WTC11 (cell line): ENCODE measurements at regions of chr2 and their contacts with region 1.

Region 1: DNA sequence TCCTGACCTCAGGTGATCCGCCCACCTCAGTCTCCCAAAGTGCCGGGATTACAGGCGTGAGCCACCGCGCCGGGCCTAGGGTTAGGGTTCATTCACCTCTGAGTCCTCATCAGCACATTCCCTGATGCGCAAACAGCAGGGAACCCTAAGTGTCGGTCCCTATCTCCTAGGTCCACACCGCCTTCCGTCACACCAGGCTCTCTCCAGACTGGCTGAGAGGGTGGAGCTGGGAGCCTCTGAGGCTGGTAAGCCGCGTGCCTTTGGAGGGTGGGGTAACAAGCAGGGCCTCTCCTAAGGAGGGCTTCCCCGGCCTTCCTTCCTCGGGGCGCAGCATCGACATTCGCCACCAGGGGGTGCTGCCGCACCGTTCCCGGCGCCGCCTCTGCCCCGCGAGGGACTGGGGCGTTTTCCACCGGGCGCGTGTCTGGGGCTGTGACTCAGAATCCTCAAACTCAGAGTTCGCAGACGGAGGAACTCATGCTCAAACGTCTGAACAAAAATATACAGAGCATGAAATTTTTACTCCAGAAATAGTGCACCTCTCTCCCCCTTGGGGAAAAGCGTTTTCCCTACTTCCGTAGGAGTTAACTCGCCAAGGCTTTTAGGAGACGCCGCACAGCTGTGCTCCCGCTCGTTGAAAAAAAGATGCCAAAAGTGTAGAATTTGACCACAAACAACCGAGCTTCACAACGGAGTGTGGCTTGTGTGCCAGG is 63.9 kb upstream of the ASAP2 start:
- DNase-seq: peak; percentile 90
- ATAC-seq: peak; percentile 92
- H3K4me3 Mint-ChIP-seq: peak overlapping the region; percentile 53
- H3K27ac Mint-ChIP-seq: no peak overlapping the region
- H3K4me1 Mint-ChIP-seq: peaks cover 16% of the 10 kb centered on the region
- H3K27me3 Mint-ChIP-seq: peaks cover 64% of the 10 kb centered on the region
- CTCF ChIP-seq: peak; percentile 94

Region 2: DNA sequence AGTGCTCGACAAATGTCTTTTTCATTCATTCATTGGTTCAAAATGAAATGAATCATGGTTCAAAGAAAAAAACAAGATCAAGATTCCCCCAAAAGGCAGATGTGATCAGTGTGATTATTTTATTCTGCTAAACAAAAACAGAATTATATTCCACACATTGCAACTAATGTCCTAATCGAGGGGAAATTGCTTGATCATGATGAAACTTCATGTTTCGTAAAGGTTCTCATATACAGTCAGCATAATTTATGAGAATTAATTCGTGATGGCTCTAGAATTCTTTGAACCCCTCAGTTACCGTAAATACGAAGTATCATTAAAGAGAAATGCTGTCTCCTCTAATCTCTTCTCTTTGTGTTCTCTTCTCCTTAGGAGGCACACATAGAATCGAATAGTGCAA is 97.1 kb before region 1 on chr2:
- CTCF ChIA-PET with region 1: no interaction called
- POLR2A ChIA-PET with region 1: no interaction called
- DNase-seq: no peak
- ATAC-seq: no peak
- H3K4me3 Mint-ChIP-seq: no peak overlapping the region
- H3K27ac Mint-ChIP-seq: no peak overlapping the region
- H3K4me1 Mint-ChIP-seq: no peaks in the 10 kb centered on the region
- H3K27me3 Mint-ChIP-seq: no peaks in the 10 kb centered on the region; the same call in 1 of the 2 replicates
- CTCF ChIP-seq: no peak

Region 3: DNA sequence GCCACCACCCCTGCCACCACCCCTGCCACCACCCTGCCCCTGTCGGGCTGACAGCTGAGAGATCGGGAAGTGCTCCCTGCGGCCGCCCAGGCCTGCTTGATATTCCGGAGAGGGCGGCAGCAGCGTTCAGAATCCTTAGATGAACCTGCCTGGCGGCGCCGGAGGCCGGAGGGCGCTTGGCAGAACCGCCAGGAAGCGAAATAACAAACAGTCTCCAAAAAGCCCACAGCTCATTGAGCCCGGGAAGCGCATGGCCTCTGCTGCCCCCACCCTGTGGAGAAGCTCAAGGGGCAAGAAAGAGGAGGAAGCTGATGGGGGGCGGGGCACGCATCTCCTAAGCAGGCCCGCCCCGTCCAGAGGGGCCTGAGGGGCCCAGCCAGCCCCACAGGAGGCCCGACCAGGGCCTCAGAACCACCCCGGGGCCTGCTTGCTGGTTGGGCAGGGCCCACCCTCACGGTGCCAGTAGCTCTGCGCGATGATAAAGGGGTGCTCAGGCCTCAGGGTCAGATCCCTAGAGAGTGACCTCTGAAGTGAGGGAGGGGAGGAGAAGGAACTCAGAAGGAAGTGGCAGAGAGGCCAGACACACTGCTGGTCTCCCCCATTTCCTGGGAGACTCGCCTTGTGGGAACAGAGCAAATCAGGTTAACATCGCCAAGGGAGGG is 46.9 kb before region 1 on chr2:
- CTCF ChIA-PET with region 1: interaction called, 16 read pairs
- POLR2A ChIA-PET with region 1: no interaction called
- DNase-seq: peak; percentile 67
- ATAC-seq: peak; percentile 95
- H3K4me3 Mint-ChIP-seq: peak overlapping the region; percentile 56
- H3K27ac Mint-ChIP-seq: no peak overlapping the region
- H3K4me1 Mint-ChIP-seq: peaks cover 19% of the 10 kb centered on the region
- H3K27me3 Mint-ChIP-seq: peaks cover 18% of the 10 kb centered on the region
- CTCF ChIP-seq: no peak

Region 4: GRCh38 chr2:9163306-9164111 is 20.8 kb after region 1 on chr2:
- CTCF ChIA-PET with region 1: interaction called, 16 read pairs
- POLR2A ChIA-PET with region 1: no interaction called
- DNase-seq: no peak
- ATAC-seq: no peak
- H3K4me3 Mint-ChIP-seq: no peak overlapping the region
- H3K27ac Mint-ChIP-seq: no peak overlapping the region
- H3K4me1 Mint-ChIP-seq: peaks cover 1% of the 10 kb centered on the region; the same call in 1 of the 2 replicates
- H3K27me3 Mint-ChIP-seq: no peaks in the 10 kb centered on the region
- CTCF ChIP-seq: no peak

Region 5: DNA sequence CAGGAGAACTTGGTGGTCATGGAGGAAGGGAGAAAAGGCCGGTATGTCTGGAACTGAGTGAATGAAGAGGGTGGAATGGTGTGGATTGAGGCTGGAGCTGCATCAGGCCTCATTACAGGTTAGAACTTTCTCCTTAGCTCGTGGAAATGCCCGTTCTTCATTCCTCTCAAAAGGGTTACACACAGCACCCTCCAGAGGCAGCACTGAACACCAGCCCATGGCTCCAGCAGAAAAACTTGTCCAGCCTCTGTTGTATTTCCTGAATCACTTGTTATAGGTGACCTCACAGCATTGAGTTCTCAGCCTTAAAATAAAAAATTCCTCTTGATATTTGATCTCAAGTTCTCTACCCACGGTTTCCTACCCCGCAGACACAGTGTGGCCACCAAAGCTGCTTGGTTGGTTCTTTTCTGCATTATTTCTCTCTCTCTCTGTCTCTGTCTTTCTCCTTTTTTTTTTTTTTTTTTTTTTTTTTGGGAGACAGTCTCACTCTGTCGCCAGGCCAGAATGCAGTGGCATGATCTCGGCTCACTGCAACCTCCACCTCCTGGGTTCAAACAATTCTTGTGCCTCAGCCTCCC is 191.0 kb after region 1 on chr2:
- CTCF ChIA-PET with region 1: interaction called, 14 read pairs
- POLR2A ChIA-PET with region 1: no interaction called
- DNase-seq: peak; percentile 34
- ATAC-seq: peak; percentile 86
- H3K4me3 Mint-ChIP-seq: no peak overlapping the region
- H3K27ac Mint-ChIP-seq: peak overlapping the region; percentile 1; the same call in 1 of the 2 replicates
- H3K4me1 Mint-ChIP-seq: no peaks in the 10 kb centered on the region
- H3K27me3 Mint-ChIP-seq: no peaks in the 10 kb centered on the region
- CTCF ChIP-seq: no peak

Region 6: GRCh38 chr2:9392898-9393765 is 250.4 kb after region 1 on chr2:
- CTCF ChIA-PET with region 1: interaction called, 15 read pairs
- POLR2A ChIA-PET with region 1: no interaction called
- DNase-seq: peak; percentile 43
- ATAC-seq: peak; percentile 82
- H3K4me3 Mint-ChIP-seq: no peak overlapping the region
- H3K27ac Mint-ChIP-seq: no peak overlapping the region
- H3K4me1 Mint-ChIP-seq: peaks cover 12% of the 10 kb centered on the region
- H3K27me3 Mint-ChIP-seq: no peaks in the 10 kb centered on the region
- CTCF ChIP-seq: no peak